ENCODE measurements at regions of chr9 and their contacts with region 1.

Region 1: DNA sequence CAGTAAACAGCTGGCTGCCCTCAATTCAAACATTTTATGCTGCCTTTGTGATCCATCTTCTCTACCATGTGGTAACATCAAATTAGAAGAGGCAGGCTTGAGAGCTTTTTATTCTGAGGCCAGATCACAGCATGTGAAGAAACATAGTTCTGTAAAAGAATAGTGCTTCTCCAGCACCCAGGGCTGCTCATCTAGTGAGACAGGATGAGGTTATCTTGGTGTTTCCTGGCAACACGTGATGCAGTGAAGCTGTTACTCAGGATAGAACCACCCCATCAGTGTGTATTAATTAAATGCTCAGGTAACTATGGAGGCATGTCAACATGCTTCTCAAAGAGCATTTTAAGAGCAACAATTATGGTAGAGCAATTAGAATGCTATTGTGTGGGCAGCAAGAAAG is 400.5 kb upstream of the ACO1 start:
- DNase-seq: no peak
- ATAC-seq: no peak
- H3K4me3 ChIP-seq: no peak overlapping the region
- H3K27ac ChIP-seq: no peak overlapping the region
- H3K4me1 ChIP-seq: no peaks in the 10 kb centered on the region
- H3K27me3 ChIP-seq: no peaks in the 10 kb centered on the region
- CTCF ChIP-seq: no peak
- EP300 ChIP-seq: no peak
- POLR2A ChIP-seq: no peak
- RAD21 ChIP-seq: no peak

Region 2: GRCh38 chr9:31674264-31674663 is 309.6 kb before region 1 on chr9:
- CTCF ChIA-PET with region 1: no interaction called
- POLR2A ChIA-PET with region 1: no interaction called
- in situ Hi-C with region 1: no loop called
- intact Hi-C with region 1: no loop called
- DNase-seq: no peak
- ATAC-seq: no peak
- H3K4me3 ChIP-seq: no peak overlapping the region
- H3K27ac ChIP-seq: no peak overlapping the region
- H3K4me1 ChIP-seq: no peaks in the 10 kb centered on the region
- H3K27me3 ChIP-seq: no peaks in the 10 kb centered on the region
- CTCF ChIP-seq: no peak
- EP300 ChIP-seq: no peak
- POLR2A ChIP-seq: no peak
- RAD21 ChIP-seq: no peak

Region 3: GRCh38 chr9:31916591-31917241 is 67.2 kb before region 1 on chr9:
- CTCF ChIA-PET with region 1: no interaction called
- POLR2A ChIA-PET with region 1: no interaction called
- in situ Hi-C with region 1: no loop called
- intact Hi-C with region 1: loop called (anchors 10 kb)
- DNase-seq: no peak
- ATAC-seq: no peak
- H3K4me3 ChIP-seq: no peak overlapping the region
- H3K27ac ChIP-seq: no peak overlapping the region
- H3K4me1 ChIP-seq: no peaks in the 10 kb centered on the region
- H3K27me3 ChIP-seq: no peaks in the 10 kb centered on the region
- CTCF ChIP-seq: no peak
- EP300 ChIP-seq: no peak
- POLR2A ChIP-seq: no peak
- RAD21 ChIP-seq: no peak

Region 4: GRCh38 chr9:31969552-31969951 is 14.3 kb before region 1 on chr9:
- CTCF ChIA-PET with region 1: no interaction called
- POLR2A ChIA-PET with region 1: no interaction called
- in situ Hi-C with region 1: no loop called
- intact Hi-C with region 1: no loop called
- DNase-seq: no peak
- ATAC-seq: no peak
- H3K4me3 ChIP-seq: no peak overlapping the region
- H3K27ac ChIP-seq: no peak overlapping the region
- H3K4me1 ChIP-seq: no peaks in the 10 kb centered on the region
- H3K27me3 ChIP-seq: no peaks in the 10 kb centered on the region
- CTCF ChIP-seq: no peak
- EP300 ChIP-seq: no peak
- POLR2A ChIP-seq: no peak
- RAD21 ChIP-seq: no peak

Region 5: GRCh38 chr9:32431940-32432555 is 448.2 kb after region 1 on chr9:
- CTCF ChIA-PET with region 1: no interaction called
- POLR2A ChIA-PET with region 1: no interaction called
- in situ Hi-C with region 1: no loop called
- intact Hi-C with region 1: no loop called
- DNase-seq: peak; percentile 24 to 50 (median 44)
- ATAC-seq: peak; percentile 86
- H3K4me3 ChIP-seq: no peak overlapping the region
- H3K27ac ChIP-seq: no peak overlapping the region
- H3K4me1 ChIP-seq: peaks cover 0 to 5% of the 10 kb centered on the region in 2 experiments; a peak in 2 of 5 replicates
- H3K27me3 ChIP-seq: no peaks in the 10 kb centered on the region
- CTCF ChIP-seq: peak; percentile 50 to 61 (median 53)
- EP300 ChIP-seq: no peak
- POLR2A ChIP-seq: no peak
- RAD21 ChIP-seq: peak in 1 of 2 experiments; percentile 34; a peak in 2 of 4 replicates

Region 6: GRCh38 chr9:32589083-32589723 is 605.3 kb after region 1 on chr9:
- CTCF ChIA-PET with region 1: no interaction called
- POLR2A ChIA-PET with region 1: no interaction called
- in situ Hi-C with region 1: no loop called
- intact Hi-C with region 1: no loop called
- DNase-seq: peak in 2 of 4 experiments; percentile 30 to 34
- ATAC-seq: peak; percentile 86
- H3K4me3 ChIP-seq: no peak overlapping the region
- H3K27ac ChIP-seq: no peak overlapping the region
- H3K4me1 ChIP-seq: no peaks in the 10 kb centered on the region
- H3K27me3 ChIP-seq: no peaks in the 10 kb centered on the region; a peak in 1 of 5 replicates
- CTCF ChIP-seq: peak; percentile 25 to 61 (median 48); a peak in 4 of 6 replicates
- EP300 ChIP-seq: no peak
- POLR2A ChIP-seq: no peak
- RAD21 ChIP-seq: peak; percentile 53 to 78

Measured in K562 (cell line).